Naive thymus-derived CD8-positive, alpha-beta T cell (primary cell): ENCODE measurements at regions of chr1 and their contacts with region 1.

Region 1: GRCh38 chr1:167220537-167221125 is at the start of gene POU2F1:
- DNase-seq: peak in 9 of 10 donors; percentile 97 to 100 (median 99)
- ATAC-seq: peak; percentile 72 to 82
- H3K4me3 Mint-ChIP-seq: peak within 1 kb of the TSS; percentile 92 to 98 (median 95)
- H3K27ac Mint-ChIP-seq: peak within 1 kb of the TSS; percentile 91 to 99 (median 98)
- H3K4me1 Mint-ChIP-seq: peaks cover 17 to 44% (median 35%) of the 10 kb centered on the region in 4 donors
- H3K27me3 Mint-ChIP-seq: peaks cover 0 to 3% (median 0%) of the 10 kb centered on the region in 5 donors
- polyA plus RNA-seq, gene POU2F1: 5.0 to 9.8 (median 8.1) TPM

Region 2: GRCh38 chr1:166838766-166839599 is 381.6 kb before region 1 on chr1 and contains the start of gene POGK:
- POLR2A ChIA-PET with region 1: interaction called, 10 read pairs
- DNase-seq: peak; percentile 68 to 87 (median 76)
- ATAC-seq: peak; percentile 89 to 91
- H3K4me3 Mint-ChIP-seq: peak within 1 kb of the TSS; percentile 84 to 96 (median 92)
- H3K27ac Mint-ChIP-seq: peak within 1 kb of the TSS; percentile 95 to 99 (median 98)
- H3K4me1 Mint-ChIP-seq: peaks cover 31 to 53% (median 46%) of the 10 kb centered on the region in 4 donors
- H3K27me3 Mint-ChIP-seq: no peaks in the 10 kb centered on the region
- polyA plus RNA-seq, gene POGK: 13.9 to 23.0 (median 15.1) TPM

Region 3: GRCh38 chr1:167090314-167090942 is 130.2 kb before region 1 on chr1 and contains the start of gene GPA33:
- POLR2A ChIA-PET with region 1: interaction called, 16 read pairs
- DNase-seq: peak in 7 of 10 donors; percentile 22 to 78 (median 60)
- ATAC-seq: peak; percentile 97 to 98
- H3K4me3 Mint-ChIP-seq: peak within 1 kb of the TSS; percentile 50 to 89 (median 78)
- H3K27ac Mint-ChIP-seq: peak within 1 kb of the TSS; percentile 95 to 100 (median 99)
- H3K4me1 Mint-ChIP-seq: peaks cover 16 to 51% (median 42%) of the 10 kb centered on the region in 4 donors
- H3K27me3 Mint-ChIP-seq: no peaks in the 10 kb centered on the region
- polyA plus RNA-seq, gene GPA33: 8.0 to 10.0 (median 9.1) TPM

Region 4: GRCh38 chr1:167268398-167268787 is 47.8 kb after region 1 on chr1:
- POLR2A ChIA-PET with region 1: interaction called, 15 read pairs
- DNase-seq: no peak
- ATAC-seq: no peak
- H3K4me3 Mint-ChIP-seq: no peak overlapping the region
- H3K27ac Mint-ChIP-seq: no peak overlapping the region
- H3K4me1 Mint-ChIP-seq: peaks cover 21 to 43% (median 35%) of the 10 kb centered on the region in 4 donors
- H3K27me3 Mint-ChIP-seq: no peaks in the 10 kb centered on the region

Region 5: DNA sequence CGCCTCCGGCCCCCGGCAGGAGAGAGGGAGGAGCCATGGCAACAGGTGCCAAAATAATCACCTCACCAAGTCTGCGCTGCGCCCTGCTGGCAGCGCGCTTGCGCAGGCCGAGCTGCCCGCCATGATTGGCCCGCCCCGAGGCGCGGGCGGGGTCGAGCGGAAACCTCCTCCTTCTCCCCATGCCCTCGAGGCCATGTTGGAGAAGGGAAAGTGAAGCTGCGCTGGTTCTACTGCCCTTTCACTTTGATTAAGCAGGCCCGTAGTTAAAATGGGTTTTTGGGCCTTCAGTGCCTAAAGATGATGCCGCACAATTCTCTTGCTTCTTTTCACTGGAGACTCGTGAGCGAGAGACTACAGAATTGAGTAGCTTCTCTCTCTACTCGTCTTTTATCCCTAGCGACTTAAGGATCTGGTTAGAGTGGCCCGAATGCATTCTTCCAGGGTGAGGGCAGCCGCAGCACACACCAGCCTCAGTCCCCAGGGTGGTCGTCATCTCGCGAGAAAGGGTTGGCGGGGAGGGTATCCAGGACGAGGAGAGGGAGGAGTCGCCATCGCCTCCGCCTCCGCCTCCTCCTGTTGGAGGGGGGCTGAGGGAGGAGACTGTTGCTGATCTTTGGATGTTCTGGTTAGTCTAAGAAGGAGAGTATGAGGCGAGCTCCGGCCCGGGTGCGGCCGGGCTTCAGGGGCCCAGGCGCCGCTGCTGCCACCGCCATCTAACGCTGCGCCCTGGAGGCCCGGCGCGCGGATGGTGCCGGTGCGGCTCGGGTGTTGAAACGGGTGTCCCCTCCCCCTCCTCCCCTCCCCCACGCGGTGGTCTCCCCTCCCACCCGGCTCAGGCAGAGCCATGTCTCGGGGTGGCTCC is 715.7 kb after region 1 on chr1 and contains the start of gene DCAF6:
- POLR2A ChIA-PET with region 1: interaction called, 11 read pairs
- DNase-seq: peak; percentile 93 to 99 (median 98)
- ATAC-seq: peak; percentile 75 to 77
- H3K4me3 Mint-ChIP-seq: peak within 1 kb of the TSS; percentile 82 to 99 (median 94)
- H3K27ac Mint-ChIP-seq: peak within 1 kb of the TSS; percentile 93 to 100 (median 99)
- H3K4me1 Mint-ChIP-seq: peaks cover 20 to 52% (median 34%) of the 10 kb centered on the region in 4 donors
- H3K27me3 Mint-ChIP-seq: no peaks in the 10 kb centered on the region
- polyA plus RNA-seq, gene DCAF6: 5.7 to 10.0 (median 7.2) TPM